ENCODE measurements at regions of chr15 and their contacts with region 1.

Region 1: DNA sequence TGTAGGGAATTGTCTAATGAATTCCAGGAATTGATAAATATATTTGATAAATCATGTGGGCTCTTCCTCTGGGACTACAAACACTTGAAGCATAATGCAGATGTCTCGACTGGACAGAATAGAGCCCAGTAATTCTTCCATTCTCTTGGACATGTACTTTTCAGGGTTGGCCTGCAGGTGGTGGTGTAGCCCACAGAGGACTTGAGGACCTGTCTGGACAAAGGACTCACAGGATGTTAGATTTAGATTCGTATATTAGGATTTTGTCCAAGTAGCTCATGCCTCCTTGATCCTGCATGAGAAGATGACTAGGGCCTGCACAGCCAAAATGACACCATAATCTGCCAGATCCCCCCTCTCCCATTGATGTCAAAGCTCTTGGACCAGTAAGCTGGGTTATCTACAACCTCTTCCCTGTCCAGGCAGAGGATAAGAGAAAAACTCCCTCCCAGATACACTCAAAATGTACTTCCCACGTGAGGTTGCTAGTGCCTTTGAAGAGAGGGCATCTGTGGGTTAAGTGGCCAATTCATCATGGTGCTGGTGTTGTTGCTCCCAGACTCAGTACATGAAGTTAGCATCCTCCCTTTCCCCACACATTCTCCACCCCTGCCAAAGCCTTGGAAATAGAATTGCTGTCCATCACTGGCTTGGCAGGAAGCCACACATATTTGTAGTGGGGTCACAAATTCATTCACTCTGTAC is 88.6 kb upstream of the ZNF280D start:
- DNase-seq: peak; percentile 35 to 71 (median 55)
- ATAC-seq: peak; percentile 97
- H3K4me3 ChIP-seq: no peak overlapping the region
- H3K27ac ChIP-seq: no peak overlapping the region
- H3K4me1 ChIP-seq: no peaks in the 10 kb centered on the region; a peak in 1 of 5 replicates
- H3K27me3 ChIP-seq: no peaks in the 10 kb centered on the region; a peak in 1 of 5 replicates
- CTCF ChIP-seq: peak; percentile 71 to 82 (median 78)
- EP300 ChIP-seq: no peak
- POLR2A ChIP-seq: no peak
- RAD21 ChIP-seq: peak; percentile 85 to 90

Region 2: GRCh38 chr15:56496635-56497034 is 325.2 kb before region 1 on chr15:
- CTCF ChIA-PET with region 1: interaction called, 6 read pairs
- POLR2A ChIA-PET with region 1: no interaction called
- in situ Hi-C with region 1: loop called (anchors 25 kb)
- intact Hi-C with region 1: loop called (anchors 5 kb)
- DNase-seq: peak; percentile 46 to 69 (median 60)
- ATAC-seq: peak; percentile 96
- H3K4me3 ChIP-seq: no peak overlapping the region
- H3K27ac ChIP-seq: no peak overlapping the region
- H3K4me1 ChIP-seq: no peaks in the 10 kb centered on the region; a peak in 1 of 5 replicates
- H3K27me3 ChIP-seq: no peaks in the 10 kb centered on the region
- CTCF ChIP-seq: peak; percentile 51 to 80 (median 59); a peak in 5 of 6 replicates
- EP300 ChIP-seq: no peak
- POLR2A ChIP-seq: no peak
- RAD21 ChIP-seq: peak; percentile 82 to 94

Region 3: GRCh38 chr15:56587686-56588085 is 234.2 kb before region 1 on chr15:
- CTCF ChIA-PET with region 1: no interaction called
- POLR2A ChIA-PET with region 1: no interaction called
- in situ Hi-C with region 1: no loop called
- intact Hi-C with region 1: no loop called
- DNase-seq: no peak
- ATAC-seq: no peak
- H3K4me3 ChIP-seq: no peak overlapping the region
- H3K27ac ChIP-seq: no peak overlapping the region
- H3K4me1 ChIP-seq: no peaks in the 10 kb centered on the region
- H3K27me3 ChIP-seq: no peaks in the 10 kb centered on the region
- CTCF ChIP-seq: no peak
- EP300 ChIP-seq: no peak
- POLR2A ChIP-seq: no peak
- RAD21 ChIP-seq: no peak

Region 4: DNA sequence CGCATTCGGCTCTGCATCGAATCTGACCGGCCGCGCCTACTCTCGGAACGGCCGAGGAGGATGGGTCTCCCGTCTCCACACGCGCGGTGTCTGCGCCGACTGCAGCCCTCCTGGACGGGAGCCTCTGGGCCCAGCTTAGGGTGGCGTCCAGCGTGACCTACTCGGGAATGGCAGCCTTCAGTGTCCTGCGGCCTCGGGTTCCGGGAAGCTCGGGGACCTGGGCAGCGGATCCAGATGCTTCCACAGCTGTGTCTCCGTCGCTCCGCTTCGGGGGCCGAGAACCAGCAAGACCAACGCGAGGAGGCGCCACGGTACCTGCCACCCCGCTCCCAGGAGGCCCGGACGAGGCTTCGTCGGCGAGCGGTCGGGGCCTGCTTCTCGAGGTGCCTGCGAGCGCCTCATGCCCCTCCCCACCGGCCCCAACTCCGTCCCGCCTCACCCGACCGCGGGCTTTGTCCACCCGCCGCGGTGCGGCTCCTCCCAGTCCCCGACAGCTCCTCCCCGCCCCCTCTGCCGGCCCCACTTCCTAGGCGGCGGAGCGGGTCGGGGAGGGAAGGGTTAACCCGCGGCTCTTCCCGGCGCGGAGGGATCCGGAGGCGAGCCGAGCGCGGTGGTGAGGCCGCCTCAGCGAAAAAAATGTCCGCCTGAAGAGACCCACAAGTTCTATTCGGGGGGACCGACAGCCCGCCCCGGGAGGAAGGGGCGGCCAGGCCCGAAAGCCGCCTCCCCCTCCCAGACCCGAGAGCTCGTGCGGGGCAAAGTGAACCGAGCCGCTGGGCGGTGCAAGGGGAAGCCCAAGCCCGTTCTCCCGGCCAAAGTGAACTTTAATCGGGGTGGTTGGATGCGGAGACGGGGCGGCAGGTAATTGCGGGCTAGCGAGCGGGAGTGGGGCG is 96.4 kb after region 1 on chr15 and contains the start of gene TCF12:
- CTCF ChIA-PET with region 1: no interaction called
- POLR2A ChIA-PET with region 1: no interaction called
- in situ Hi-C with region 1: no loop called
- intact Hi-C with region 1: loop called (anchors 5 kb)
- DNase-seq: peak; percentile 93 to 96 (median 94)
- ATAC-seq: peak; percentile 92
- H3K4me3 ChIP-seq: peak within 1 kb of the TSS; percentile 88
- H3K27ac ChIP-seq: peak within 1 kb of the TSS; percentile 92
- H3K4me1 ChIP-seq: peaks cover 8 to 20% of the 10 kb centered on the region in 2 experiments; a peak in 4 of 5 replicates
- H3K27me3 ChIP-seq: no peaks in the 10 kb centered on the region
- CTCF ChIP-seq: peak; percentile 43 to 65 (median 51)
- EP300 ChIP-seq: peak; percentile 49; the same call in 1 of the 2 replicates
- POLR2A ChIP-seq: peak; percentile 82
- RAD21 ChIP-seq: peak; percentile 55 to 66
- polyA plus RNA-seq, gene TCF12: 10.5 to 12.9 TPM

Region 5: GRCh38 chr15:57146506-57147201 is 324.8 kb after region 1 on chr15:
- CTCF ChIA-PET with region 1: interaction called, 5 read pairs
- POLR2A ChIA-PET with region 1: no interaction called
- in situ Hi-C with region 1: no loop called
- intact Hi-C with region 1: loop called (anchors 5 kb)
- DNase-seq: peak; percentile 10 to 53 (median 16)
- ATAC-seq: 0 out of 3 replicates have a peak, but pooled peaks have one; percentile 45
- H3K4me3 ChIP-seq: no peak overlapping the region
- H3K27ac ChIP-seq: no peak overlapping the region
- H3K4me1 ChIP-seq: peaks cover 4 to 16% of the 10 kb centered on the region in 2 experiments; a peak in 4 of 5 replicates
- H3K27me3 ChIP-seq: no peaks in the 10 kb centered on the region
- CTCF ChIP-seq: peak in 2 of 3 experiments; percentile 46 to 78; a peak in 4 of 6 replicates
- EP300 ChIP-seq: no peak
- POLR2A ChIP-seq: no peak
- RAD21 ChIP-seq: peak; percentile 48 to 74

Region 6: GRCh38 chr15:57281321-57281720 is 459.4 kb after region 1 on chr15:
- CTCF ChIA-PET with region 1: no interaction called
- POLR2A ChIA-PET with region 1: no interaction called
- in situ Hi-C with region 1: no loop called
- intact Hi-C with region 1: no loop called
- DNase-seq: no peak
- ATAC-seq: no peak
- H3K4me3 ChIP-seq: no peak overlapping the region
- H3K27ac ChIP-seq: no peak overlapping the region
- H3K4me1 ChIP-seq: peaks cover 0 to 2% of the 10 kb centered on the region in 2 experiments; a peak in 1 of 5 replicates
- H3K27me3 ChIP-seq: no peaks in the 10 kb centered on the region
- CTCF ChIP-seq: no peak
- EP300 ChIP-seq: no peak
- POLR2A ChIP-seq: no peak
- RAD21 ChIP-seq: no peak

Region 7: GRCh38 chr15:57306161-57306943 is 484.5 kb after region 1 on chr15:
- CTCF ChIA-PET with region 1: interaction called, 3 read pairs
- POLR2A ChIA-PET with region 1: no interaction called
- in situ Hi-C with region 1: no loop called
- intact Hi-C with region 1: loop called (anchors 1 kb)
- DNase-seq: peak; percentile 83 to 89 (median 86)
- ATAC-seq: peak; percentile 96
- H3K4me3 ChIP-seq: no peak overlapping the region
- H3K27ac ChIP-seq: peak overlapping the region; percentile 60; the same call in 2 of the 3 replicates
- H3K4me1 ChIP-seq: peaks cover 9 to 21% of the 10 kb centered on the region in 2 experiments
- H3K27me3 ChIP-seq: no peaks in the 10 kb centered on the region
- CTCF ChIP-seq: peak; percentile 78 to 89 (median 86)
- EP300 ChIP-seq: no peak
- POLR2A ChIP-seq: no peak
- RAD21 ChIP-seq: peak; percentile 82 to 89